Activated B cell treated with CpG ODN at 0.5 μM for 24 hours (primary cell): ENCODE measurements at regions of chr1 and their contacts with region 1.

Region 1: DNA sequence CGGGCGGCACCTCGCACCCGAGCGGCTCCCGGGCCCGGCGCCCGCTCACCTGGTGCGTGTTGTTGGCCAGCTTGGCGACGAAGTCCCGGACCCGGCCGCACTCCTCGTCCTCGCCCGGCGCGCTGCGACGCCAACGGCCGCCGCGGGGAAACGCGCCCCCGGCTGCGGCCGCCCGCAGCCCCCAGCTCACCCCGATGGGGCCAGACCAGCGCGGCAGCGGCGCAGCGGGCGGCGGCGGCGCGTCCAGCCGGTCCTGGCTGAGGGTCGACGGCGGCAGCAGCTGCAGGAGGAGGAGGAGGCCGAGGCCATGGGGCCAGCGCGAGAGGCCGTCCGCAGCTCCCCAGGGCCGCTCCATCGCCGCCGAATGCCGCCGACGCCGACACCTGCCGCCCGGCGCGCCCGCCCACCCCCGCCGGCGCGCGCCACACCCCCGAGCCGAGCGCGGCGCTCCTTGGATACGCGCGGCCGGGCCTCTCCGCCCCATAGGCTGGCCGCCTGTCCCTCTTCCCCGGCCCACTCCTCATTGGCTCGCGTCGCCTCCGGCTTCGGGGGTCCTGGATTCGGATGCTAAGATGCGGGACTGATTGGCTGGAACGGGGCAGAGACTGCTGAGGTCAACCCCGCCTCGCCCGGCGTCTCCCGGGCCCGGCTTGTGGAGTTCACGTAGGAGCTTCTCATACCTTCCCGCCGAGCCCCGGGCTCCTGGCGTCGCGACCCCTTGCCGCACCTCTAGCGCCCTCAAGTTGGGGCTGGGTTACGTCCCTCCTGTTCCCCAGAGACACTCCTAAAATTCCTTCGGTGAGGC is at the start of gene SORT1:
- DNase-seq: peak; percentile 54
- ATAC-seq: peak; percentile 93
- H3K4me3 Mint-ChIP-seq: peak within 1 kb of the TSS; percentile 83
- H3K27ac Mint-ChIP-seq: no peak within 1 kb of the TSS
- H3K4me1 Mint-ChIP-seq: peaks cover 19% of the 10 kb centered on the region
- H3K27me3 Mint-ChIP-seq: peaks cover 45% of the 10 kb centered on the region
- CTCF ChIP-seq: no peak
- total RNA-seq, gene SORT1: 0.20 and 0.37 TPM in 2 replicates

Region 2: DNA sequence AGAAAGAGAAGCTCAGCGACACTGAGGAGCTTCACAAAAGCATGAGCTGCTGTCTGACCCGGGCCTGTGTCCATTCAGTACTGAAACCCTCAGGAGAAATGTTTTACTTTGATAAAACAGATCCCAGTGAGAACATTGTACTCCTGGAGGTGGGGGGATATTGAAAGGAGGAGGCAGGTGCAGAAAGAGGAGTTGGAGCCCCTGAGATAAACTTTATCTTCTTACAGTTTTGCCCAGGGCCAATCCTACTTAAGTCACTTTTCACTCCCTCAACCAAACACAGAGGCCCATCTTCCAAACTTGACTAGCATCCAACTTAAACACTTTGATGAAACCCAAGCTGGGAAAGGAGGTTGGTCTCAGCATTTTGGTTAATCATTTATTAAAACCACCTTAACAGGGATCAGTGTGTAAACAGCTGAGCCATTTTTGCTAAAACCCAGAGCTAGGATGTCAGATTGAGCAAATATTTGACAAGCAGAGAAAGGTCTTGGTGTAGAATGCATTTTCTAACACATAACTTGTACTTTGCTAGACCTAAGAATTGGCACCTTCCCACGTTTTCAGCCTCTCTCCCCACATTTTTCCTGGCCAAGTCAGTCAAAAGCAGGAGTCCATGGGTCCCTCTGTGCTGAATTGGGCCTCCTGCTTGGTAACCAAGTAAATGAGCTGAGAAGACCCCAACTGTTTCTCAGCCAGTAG is 216.5 kb before region 1 on chr1:
- CTCF ChIA-PET with region 1: no interaction called
- POLR2A ChIA-PET with region 1: no interaction called
- intact Hi-C with region 1: no loop called
- DNase-seq: no peak
- ATAC-seq: no peak
- H3K4me3 Mint-ChIP-seq: no peak overlapping the region
- H3K27ac Mint-ChIP-seq: no peak overlapping the region
- H3K4me1 Mint-ChIP-seq: no peaks in the 10 kb centered on the region
- H3K27me3 Mint-ChIP-seq: no peaks in the 10 kb centered on the region
- CTCF ChIP-seq: no peak

Region 3: GRCh38 chr1:109201123-109201703 is 196.5 kb before region 1 on chr1:
- CTCF ChIA-PET with region 1: interaction called, 12 read pairs
- POLR2A ChIA-PET with region 1: no interaction called
- intact Hi-C with region 1: loop called (anchors 5 kb)
- DNase-seq: no peak
- ATAC-seq: peak; percentile 69
- H3K4me3 Mint-ChIP-seq: no peak overlapping the region
- H3K27ac Mint-ChIP-seq: no peak overlapping the region
- H3K4me1 Mint-ChIP-seq: peaks cover 9% of the 10 kb centered on the region
- H3K27me3 Mint-ChIP-seq: no peaks in the 10 kb centered on the region
- CTCF ChIP-seq: no peak

Region 4: DNA sequence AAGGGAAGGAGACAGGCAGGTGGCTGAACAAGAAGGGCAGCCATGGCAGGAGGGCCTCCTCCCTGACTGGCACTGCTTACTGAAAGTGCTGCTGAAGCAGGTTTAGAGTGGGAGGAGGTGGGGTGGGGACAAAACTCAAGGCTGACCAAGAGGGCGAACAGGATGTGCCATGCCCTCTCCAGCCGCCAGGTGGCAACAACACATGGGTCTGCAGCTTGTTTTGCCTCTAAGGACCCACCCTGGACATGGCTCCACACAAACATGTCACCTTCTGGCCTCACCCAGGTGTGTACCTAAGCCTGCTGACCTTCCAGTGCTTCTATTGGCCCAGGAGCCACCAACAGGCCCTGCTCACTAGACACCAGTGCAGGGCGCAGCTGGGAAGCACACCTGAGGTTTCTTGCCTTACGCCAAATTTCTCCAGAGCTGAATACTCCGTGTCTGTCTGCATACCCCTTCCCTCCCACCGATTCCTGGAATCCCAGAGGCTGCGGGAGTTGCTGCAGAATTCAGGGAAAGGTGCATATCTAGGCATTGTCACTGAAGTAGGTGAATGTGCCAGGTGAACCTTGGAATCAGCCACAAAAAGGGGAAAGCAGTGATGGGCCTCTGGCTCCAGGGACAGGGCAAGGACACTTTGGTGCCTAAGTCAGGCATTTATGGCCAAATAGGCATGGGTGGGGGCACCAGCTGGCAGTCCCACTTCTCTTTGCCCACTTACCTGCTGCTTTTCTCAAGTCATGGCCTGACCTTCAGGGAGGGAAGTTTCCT is 120.1 kb before region 1 on chr1:
- CTCF ChIA-PET with region 1: interaction called, 207 read pairs
- POLR2A ChIA-PET with region 1: interaction called, 8 read pairs
- intact Hi-C with region 1: loop called (anchors 1 kb)
- DNase-seq: peak; percentile 63
- ATAC-seq: peak; percentile 95
- H3K4me3 Mint-ChIP-seq: no peak overlapping the region
- H3K27ac Mint-ChIP-seq: no peak overlapping the region
- H3K4me1 Mint-ChIP-seq: peaks cover 5% of the 10 kb centered on the region
- H3K27me3 Mint-ChIP-seq: no peaks in the 10 kb centered on the region
- CTCF ChIP-seq: no peak

Region 5: DNA sequence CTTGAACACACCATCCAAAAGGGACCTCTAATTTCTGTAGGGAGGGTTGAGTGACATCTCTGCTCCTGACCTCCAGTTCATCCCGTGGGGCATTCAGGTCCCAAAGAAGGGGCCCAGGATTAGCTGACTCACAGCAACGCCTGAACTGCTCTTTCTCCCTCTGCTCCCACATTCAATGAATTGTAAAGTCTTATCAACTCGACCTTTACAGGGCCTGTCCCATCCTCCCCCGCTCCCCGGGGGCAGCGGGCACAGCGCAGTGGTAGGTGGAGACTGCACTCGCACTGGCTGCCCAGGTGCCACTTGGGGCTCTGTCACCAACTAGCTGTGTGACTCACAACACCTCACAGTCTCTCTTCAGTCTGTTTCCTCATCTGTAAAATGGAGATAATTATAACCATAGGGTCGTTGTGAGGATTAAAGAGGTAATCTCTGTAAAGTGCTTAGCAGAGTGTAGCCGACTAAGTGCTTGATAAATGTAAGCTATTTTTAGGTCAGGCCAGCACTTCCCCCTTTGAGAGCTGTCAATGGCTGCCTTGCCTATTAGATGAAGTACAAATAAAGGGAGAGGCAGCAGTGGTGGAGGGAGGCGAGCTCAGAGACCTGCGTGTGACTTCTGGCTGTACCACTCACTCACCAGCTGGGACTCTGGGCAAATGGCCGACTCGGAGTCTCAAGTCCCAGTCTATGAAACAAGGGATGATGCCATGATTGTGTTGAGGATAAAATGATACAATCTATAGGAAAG is 90.3 kb before region 1 on chr1:
- CTCF ChIA-PET with region 1: interaction called, 11 read pairs
- POLR2A ChIA-PET with region 1: no interaction called
- intact Hi-C with region 1: no loop called
- DNase-seq: peak; percentile 41
- ATAC-seq: peak; percentile 98
- H3K4me3 Mint-ChIP-seq: peak overlapping the region; percentile 60
- H3K27ac Mint-ChIP-seq: peak overlapping the region; percentile 80
- H3K4me1 Mint-ChIP-seq: peaks cover 19% of the 10 kb centered on the region
- H3K27me3 Mint-ChIP-seq: peaks cover 5% of the 10 kb centered on the region
- CTCF ChIP-seq: no peak